GM10248 (cell line): ENCODE measurements at regions of chr12 and their contacts with region 1.

Region 1: DNA sequence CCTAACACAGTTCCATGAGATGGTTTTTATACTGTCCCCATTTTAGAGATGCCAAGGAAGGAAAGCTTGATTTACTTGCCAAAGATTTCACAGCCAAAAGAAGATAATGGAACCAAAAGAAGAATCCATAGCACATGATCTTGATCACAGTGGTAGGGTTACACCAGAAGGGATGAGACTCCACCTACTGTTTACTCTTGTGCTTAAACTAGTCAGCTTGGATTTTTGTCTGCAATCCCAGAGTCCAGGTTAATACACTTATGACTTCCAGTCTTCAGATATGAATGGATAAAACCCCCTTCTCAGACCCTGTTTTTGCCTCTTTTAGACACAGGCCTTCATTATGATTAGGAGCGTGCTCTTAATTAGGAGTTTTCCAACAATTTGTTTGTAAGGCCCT is 454.2 kb downstream of the AEBP2 start:
- DNase-seq: peak; percentile 9
- CTCF ChIP-seq: peak; percentile 22

Region 2: GRCh38 chr12:19757317-19757877 is 136.1 kb before region 1 on chr12:
- CTCF ChIA-PET with region 1: interaction called, 12 read pairs
- POLR2A ChIA-PET with region 1: no interaction called
- DNase-seq: no peak
- CTCF ChIP-seq: peak; percentile 54

Region 3: GRCh38 chr12:19841451-19841850 is 52.1 kb before region 1 on chr12:
- CTCF ChIA-PET with region 1: no interaction called
- POLR2A ChIA-PET with region 1: no interaction called
- DNase-seq: no peak
- CTCF ChIP-seq: no peak